ENCODE measurements at regions of chr1 and their contacts with region 1.

Region 1: DNA sequence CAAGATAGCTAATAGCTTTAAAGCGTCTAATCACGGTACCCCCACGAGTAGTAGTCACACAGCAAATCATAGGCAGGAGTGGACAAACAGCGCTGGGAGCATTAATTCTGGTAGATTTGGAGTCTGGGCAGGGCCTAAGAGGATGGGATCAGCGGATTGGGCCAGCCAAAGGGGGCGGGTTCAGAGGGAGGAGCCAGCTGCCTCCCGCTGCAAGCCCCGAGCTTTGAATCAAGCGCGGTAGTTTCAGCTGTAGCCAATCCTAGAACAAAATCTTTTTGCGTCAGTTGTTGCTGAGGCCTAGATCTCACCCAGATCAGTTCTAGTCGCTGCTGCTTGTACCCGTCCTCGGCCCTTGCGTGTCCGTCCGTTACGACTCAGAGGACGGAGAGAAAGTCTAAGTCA is 576 bp upstream of the NASP start:
- DNase-seq: peak; percentile 92
- H3K4me3 Mint-ChIP-seq: peak overlapping the region; percentile 97
- H3K27ac Mint-ChIP-seq: peak overlapping the region; percentile 98
- H3K4me1 Mint-ChIP-seq: peaks cover 24% of the 10 kb centered on the region
- H3K27me3 Mint-ChIP-seq: no peaks in the 10 kb centered on the region

Region 2: DNA sequence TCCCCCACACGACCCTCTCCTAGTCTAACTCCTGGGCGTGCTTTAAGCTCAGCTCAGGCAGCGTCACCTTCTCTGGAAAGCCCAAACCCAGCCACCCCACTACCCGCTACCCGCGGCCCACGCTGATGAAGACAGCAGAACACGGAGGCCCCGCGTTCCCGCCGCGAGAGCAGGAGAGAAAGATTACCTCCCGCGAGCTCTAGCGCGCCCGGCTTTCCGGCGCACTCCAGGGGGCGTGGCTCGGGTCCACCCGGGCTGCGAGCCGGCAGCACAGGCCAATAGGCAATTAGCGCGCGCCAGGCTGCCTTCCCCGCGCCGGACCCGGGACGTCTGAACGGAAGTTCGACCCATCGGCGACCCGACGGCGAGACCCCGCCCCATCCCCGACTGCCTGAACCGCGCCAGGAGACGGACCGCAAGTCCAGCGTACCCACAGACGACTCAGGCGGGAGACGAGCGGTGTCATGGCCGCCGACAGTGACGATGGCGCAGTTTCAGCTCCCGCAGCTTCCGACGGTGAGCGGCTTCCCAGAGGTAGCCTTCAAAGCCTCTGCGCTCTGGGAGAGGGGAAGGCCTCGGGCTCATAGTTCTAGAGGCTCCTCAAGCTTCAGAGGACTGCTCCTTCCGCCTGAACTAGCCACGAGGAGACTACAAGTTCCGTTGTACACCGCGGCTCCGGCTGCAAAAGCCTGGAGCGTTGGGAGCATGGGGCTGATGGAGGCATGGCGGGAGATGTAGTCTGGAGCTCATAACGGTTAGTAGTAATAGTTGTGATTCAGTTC is 243.3 kb before region 1 on chr1 and contains the starts of genes MUTYH and TOE1:
- intact Hi-C with region 1: loop called (anchors 5 kb)
- DNase-seq: peak; percentile 95
- H3K4me3 Mint-ChIP-seq: peak within 1 kb of the TSS; percentile 95
- H3K27ac Mint-ChIP-seq: peak within 1 kb of the TSS; percentile 99
- H3K4me1 Mint-ChIP-seq: peaks cover 37% of the 10 kb centered on the region
- H3K27me3 Mint-ChIP-seq: no peaks in the 10 kb centered on the region
- total RNA-seq, gene MUTYH: 50.1 and 50.9 TPM in 2 replicates
- total RNA-seq, gene TOE1: 26.3 and 29.3 TPM in 2 replicates

Region 3: GRCh38 chr1:45521398-45522323 is 61.6 kb before region 1 on chr1 and contains the start of gene PRDX1:
- intact Hi-C with region 1: loop called (anchors 1 kb)
- DNase-seq: peak; percentile 96
- H3K4me3 Mint-ChIP-seq: peak within 1 kb of the TSS; percentile 96
- H3K27ac Mint-ChIP-seq: peak within 1 kb of the TSS; percentile 95
- H3K4me1 Mint-ChIP-seq: peaks cover 37% of the 10 kb centered on the region
- H3K27me3 Mint-ChIP-seq: peaks cover 4% of the 10 kb centered on the region
- total RNA-seq, gene PRDX1: 703 and 712 TPM in 2 replicates

Region 4: GRCh38 chr1:45686317-45687013 is 103.2 kb after region 1 on chr1 and contains the start of gene GPBP1L1:
- intact Hi-C with region 1: loop called (anchors 1 kb)
- DNase-seq: peak; percentile 96
- H3K4me3 Mint-ChIP-seq: peak within 1 kb of the TSS; percentile 98
- H3K27ac Mint-ChIP-seq: peak within 1 kb of the TSS; percentile 100
- H3K4me1 Mint-ChIP-seq: peaks cover 21% of the 10 kb centered on the region
- H3K27me3 Mint-ChIP-seq: no peaks in the 10 kb centered on the region
- total RNA-seq, gene GPBP1L1: 100 and 103 TPM in 2 replicates

Region 5: DNA sequence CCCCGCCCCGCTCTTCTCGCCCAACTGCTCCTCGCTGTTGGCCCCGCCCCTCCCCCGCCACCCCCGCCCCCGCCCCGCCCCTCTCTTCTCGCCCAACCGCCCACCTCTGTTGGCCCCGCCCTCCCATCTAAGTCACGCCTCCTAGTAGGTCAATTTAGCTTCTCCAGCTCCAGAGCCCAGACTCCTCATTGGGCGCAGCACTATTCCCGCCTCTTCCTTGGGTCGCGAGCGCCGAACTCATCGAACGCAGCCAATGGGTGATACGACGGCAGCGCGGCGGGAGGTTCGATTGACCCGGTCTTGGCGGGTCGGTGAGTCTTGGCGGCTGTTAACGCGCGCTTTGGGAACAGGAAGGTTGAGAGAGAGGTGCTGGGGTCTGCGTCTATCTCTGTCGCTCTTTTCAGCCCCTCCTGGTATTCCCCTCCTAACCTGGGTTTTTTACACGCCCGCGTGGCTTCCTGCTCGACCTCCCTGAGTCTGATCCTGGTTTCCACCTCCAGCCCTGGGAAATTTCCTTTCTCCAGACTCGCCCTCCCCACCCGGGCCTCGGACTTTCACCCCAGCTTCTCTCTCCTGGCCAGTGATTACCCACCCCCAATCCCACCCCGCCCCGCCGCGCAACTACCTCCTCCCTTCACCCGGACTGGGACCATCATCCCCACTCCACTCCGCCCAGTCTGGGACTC is 664.3 kb after region 1 on chr1 and contains the start of gene RAD54L:
- intact Hi-C with region 1: loop called (anchors 5 kb)
- DNase-seq: peak; percentile 97
- H3K4me3 Mint-ChIP-seq: peak within 1 kb of the TSS; percentile 98
- H3K27ac Mint-ChIP-seq: peak within 1 kb of the TSS; percentile 97
- H3K4me1 Mint-ChIP-seq: peaks cover 32% of the 10 kb centered on the region
- H3K27me3 Mint-ChIP-seq: no peaks in the 10 kb centered on the region
- total RNA-seq, gene RAD54L: 48.0 and 49.0 TPM in 2 replicates